ENCODE measurements at regions of chr4 and their contacts with region 1.

Region 1: GRCh38 chr4:75673027-75673958 is at the start of gene G3BP2:
- DNase-seq: peak; percentile 87 to 99 (median 97)
- ATAC-seq: peak; percentile 97
- H3K4me3 ChIP-seq: peak within 1 kb of the TSS; percentile 91
- H3K4me3 Mint-ChIP-seq: peak within 1 kb of the TSS; percentile 96 to 100 (median 98)
- H3K27ac ChIP-seq: peak within 1 kb of the TSS; percentile 96
- H3K27ac Mint-ChIP-seq: peak within 1 kb of the TSS; percentile 92 to 100 (median 99)
- H3K4me1 ChIP-seq: peaks cover 38 to 43% of the 10 kb centered on the region in 2 donors
- H3K4me1 Mint-ChIP-seq: peaks cover 36 to 47% (median 44%) of the 10 kb centered on the region in 7 donors
- H3K27me3 ChIP-seq: no peaks in the 10 kb centered on the region
- H3K27me3 Mint-ChIP-seq: no peaks in the 10 kb centered on the region
- total RNA-seq, gene G3BP2: 161 to 299 (median 167) TPM

Region 2: DNA sequence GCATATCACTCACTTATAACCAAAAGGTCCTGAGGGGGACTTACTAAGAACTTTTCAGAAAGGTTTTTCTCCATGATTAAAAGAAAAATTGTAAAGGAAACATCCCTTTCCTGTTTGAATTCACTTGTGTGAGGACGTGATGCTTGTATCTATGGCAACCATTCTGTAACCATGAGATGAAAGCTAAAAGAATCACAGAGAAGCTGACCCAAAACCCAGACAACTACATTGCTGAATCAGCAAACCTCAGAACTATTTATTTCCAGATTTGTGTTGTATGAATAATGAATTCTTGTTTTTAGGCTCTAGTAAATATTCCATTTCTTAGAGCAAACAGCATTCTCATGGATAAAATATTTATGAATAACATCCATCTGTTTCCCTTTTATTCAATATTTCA is 250.3 kb before region 1 on chr4:
- CTCF ChIA-PET with region 1: no interaction called
- POLR2A ChIA-PET with region 1: no interaction called
- intact Hi-C with region 1: no loop called
- DNase-seq: no peak
- ATAC-seq: no peak
- H3K4me3 ChIP-seq: no peak overlapping the region
- H3K4me3 Mint-ChIP-seq: no peak overlapping the region
- H3K27ac ChIP-seq: no peak overlapping the region
- H3K27ac Mint-ChIP-seq: no peak overlapping the region
- H3K4me1 ChIP-seq: no peaks in the 10 kb centered on the region
- H3K4me1 Mint-ChIP-seq: no peaks in the 10 kb centered on the region
- H3K27me3 ChIP-seq: peaks cover 0 to 4% of the 10 kb centered on the region in 2 donors
- H3K27me3 Mint-ChIP-seq: peaks cover 2 to 27% (median 8%) of the 10 kb centered on the region in 5 donors

Region 3: GRCh38 chr4:75653845-75654503 is 19.3 kb before region 1 on chr4:
- CTCF ChIA-PET with region 1: no interaction called
- POLR2A ChIA-PET with region 1: interaction called, 17 read pairs
- intact Hi-C with region 1: loop called (anchors 1 kb)
- DNase-seq: no peak
- ATAC-seq: no peak
- H3K4me3 ChIP-seq: no peak overlapping the region
- H3K4me3 Mint-ChIP-seq: peak overlapping the region in 5 of 10 donors; percentile 31 to 61 (median 49)
- H3K27ac ChIP-seq: peak overlapping the region; percentile 82
- H3K27ac Mint-ChIP-seq: peak overlapping the region; percentile 5 to 94 (median 86)
- H3K4me1 ChIP-seq: peaks cover 19 to 36% of the 10 kb centered on the region in 2 donors
- H3K4me1 Mint-ChIP-seq: peaks cover 16 to 66% (median 51%) of the 10 kb centered on the region in 7 donors
- H3K27me3 ChIP-seq: no peaks in the 10 kb centered on the region
- H3K27me3 Mint-ChIP-seq: no peaks in the 10 kb centered on the region

Region 4: DNA sequence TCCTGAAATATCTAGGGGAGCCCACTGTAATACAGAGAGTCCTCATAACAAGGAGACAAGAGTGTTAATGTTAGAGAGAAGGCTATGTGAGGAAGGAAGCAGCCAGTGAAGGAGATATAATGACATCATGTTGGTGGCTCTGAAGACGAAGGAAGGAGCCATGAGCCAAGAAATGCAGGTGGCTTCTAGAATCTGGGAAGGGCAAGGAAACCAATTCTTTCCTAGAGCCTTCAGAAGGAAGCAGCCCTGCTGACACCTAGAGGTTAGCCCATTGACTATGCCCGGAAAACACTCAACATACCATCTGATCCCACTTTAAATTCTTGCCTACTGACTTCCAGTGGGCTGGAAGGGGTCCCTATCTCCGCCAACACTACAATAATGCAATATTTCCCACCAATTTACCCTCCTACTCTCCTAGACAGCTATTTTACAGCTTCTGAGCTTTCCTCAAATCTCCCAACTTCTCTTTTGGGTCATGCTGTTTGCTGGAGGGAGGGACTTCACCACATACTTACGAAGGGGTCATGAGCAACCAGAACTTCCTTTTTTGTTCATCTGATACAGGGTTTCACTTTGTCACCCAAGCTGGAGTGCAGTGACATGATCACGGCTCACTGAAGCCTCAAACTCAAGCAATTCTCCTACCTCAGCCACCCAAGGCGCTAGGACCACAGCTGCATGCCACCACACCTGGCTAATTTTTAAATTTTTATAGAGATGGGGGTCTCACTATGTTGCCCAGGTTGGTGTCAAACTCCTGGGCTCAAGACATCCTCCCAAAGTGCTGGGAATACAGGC is 25.1 kb after region 1 on chr4:
- CTCF ChIA-PET with region 1: no interaction called
- POLR2A ChIA-PET with region 1: interaction called, 3 read pairs
- intact Hi-C with region 1: loop called in 1 of 2 experiments (anchors 1 kb)
- DNase-seq: peak in 1 of 9 donors; percentile 11
- ATAC-seq: peak; percentile 80
- H3K4me3 ChIP-seq: no peak overlapping the region
- H3K4me3 Mint-ChIP-seq: peak overlapping the region in 5 of 10 donors; percentile 9 to 64 (median 29)
- H3K27ac ChIP-seq: peak overlapping the region; percentile 14
- H3K27ac Mint-ChIP-seq: peak overlapping the region; percentile 4 to 89 (median 67)
- H3K4me1 ChIP-seq: peaks cover 14 to 20% of the 10 kb centered on the region in 2 donors
- H3K4me1 Mint-ChIP-seq: peaks cover 16 to 43% (median 39%) of the 10 kb centered on the region in 7 donors
- H3K27me3 ChIP-seq: no peaks in the 10 kb centered on the region
- H3K27me3 Mint-ChIP-seq: no peaks in the 10 kb centered on the region

Region 5: GRCh38 chr4:75995727-75996126 is 322.4 kb after region 1 on chr4:
- CTCF ChIA-PET with region 1: no interaction called
- POLR2A ChIA-PET with region 1: no interaction called
- intact Hi-C with region 1: loop called in 1 of 2 experiments (anchors 1 kb)
- DNase-seq: peak in 7 of 9 donors; percentile 13 to 62 (median 43)
- ATAC-seq: peak; percentile 39
- H3K4me3 ChIP-seq: no peak overlapping the region
- H3K4me3 Mint-ChIP-seq: no peak overlapping the region
- H3K27ac ChIP-seq: no peak overlapping the region
- H3K27ac Mint-ChIP-seq: no peak overlapping the region
- H3K4me1 ChIP-seq: no peaks in the 10 kb centered on the region
- H3K4me1 Mint-ChIP-seq: peaks cover 0 to 10% (median 5%) of the 10 kb centered on the region in 7 donors
- H3K27me3 ChIP-seq: no peaks in the 10 kb centered on the region
- H3K27me3 Mint-ChIP-seq: peaks cover 0 to 10% (median 2%) of the 10 kb centered on the region in 5 donors

Region 6: GRCh38 chr4:76305971-76306881 is 632.9 kb after region 1 on chr4 and contains the start of gene STBD1:
- CTCF ChIA-PET with region 1: no interaction called
- POLR2A ChIA-PET with region 1: no interaction called
- intact Hi-C with region 1: no loop called
- DNase-seq: peak in 7 of 9 donors; percentile 5 to 54 (median 19)
- ATAC-seq: peak; percentile 68
- H3K4me3 ChIP-seq: peak within 1 kb of the TSS; percentile 62
- H3K4me3 Mint-ChIP-seq: peak within 1 kb of the TSS; percentile 75 to 92 (median 82)
- H3K27ac ChIP-seq: peak within 1 kb of the TSS; percentile 20
- H3K27ac Mint-ChIP-seq: peak within 1 kb of the TSS in 7 of 9 donors; percentile 22 to 83 (median 63)
- H3K4me1 ChIP-seq: peaks cover 18% of the 10 kb centered on the region in 2 donors
- H3K4me1 Mint-ChIP-seq: peaks cover 20 to 37% (median 32%) of the 10 kb centered on the region in 7 donors
- H3K27me3 ChIP-seq: no peaks in the 10 kb centered on the region
- H3K27me3 Mint-ChIP-seq: peaks cover 0 to 42% (median 5%) of the 10 kb centered on the region in 5 donors
- total RNA-seq, gene STBD1: 0.62 to 2.1 (median 0.85) TPM in 4 of 5 experiments, not detected in the other

Measured in naive thymus-derived CD4-positive, alpha-beta T cell (primary cell).